Breast epithelium (tissue), 4 donors: ENCODE measurements at regions of chr17 and their contacts with region 1.

Region 1: DNA sequence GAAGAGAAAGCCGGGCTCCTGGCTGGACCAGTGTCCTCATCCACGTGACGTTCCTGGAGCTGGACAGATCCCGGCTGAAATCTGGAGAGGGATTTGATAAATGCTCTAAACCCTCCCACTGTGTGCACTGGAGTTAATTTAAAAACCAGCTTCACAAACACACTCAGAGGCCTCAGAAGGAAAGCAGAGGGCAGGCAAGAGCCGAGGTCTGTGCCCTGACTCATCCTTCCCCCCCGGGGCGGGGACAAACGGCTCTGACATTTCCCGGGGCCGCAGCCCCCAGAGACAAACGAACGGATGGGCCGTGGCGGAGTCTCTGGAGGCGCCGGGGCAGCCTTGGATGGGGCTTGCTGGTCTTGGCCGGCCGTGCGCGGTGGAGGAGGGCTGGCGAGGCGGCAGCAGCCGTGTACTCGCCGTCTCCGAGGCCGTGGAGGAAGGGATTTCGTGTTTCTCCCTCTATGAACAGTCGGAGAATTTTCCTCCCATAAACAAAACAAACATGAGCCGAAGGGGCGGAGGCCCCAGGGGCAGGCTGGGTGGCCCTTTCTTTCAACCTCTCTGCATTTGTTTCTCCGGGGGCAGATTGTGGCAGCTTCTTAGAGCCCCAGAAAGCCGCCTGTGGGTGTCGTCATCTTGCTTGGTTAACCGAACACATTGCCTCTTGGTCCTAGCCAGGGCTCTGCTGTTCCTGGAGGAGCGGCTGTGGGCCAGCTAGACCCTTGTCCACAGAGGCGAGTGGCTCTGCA is 94.3 kb downstream of the NTN1 start:
- DNase-seq: no peak
- H3K4me3 ChIP-seq: peak overlapping the region; percentile 41 to 66 (median 45)
- H3K27ac ChIP-seq: peak overlapping the region; percentile 61 to 83
- H3K4me1 ChIP-seq: no peaks in the 10 kb centered on the region
- H3K27me3 ChIP-seq: no peaks in the 10 kb centered on the region
- CTCF ChIP-seq: peak in 2 of 3 donors; percentile 13 to 30
- POLR2A ChIP-seq: no peak

Region 2: DNA sequence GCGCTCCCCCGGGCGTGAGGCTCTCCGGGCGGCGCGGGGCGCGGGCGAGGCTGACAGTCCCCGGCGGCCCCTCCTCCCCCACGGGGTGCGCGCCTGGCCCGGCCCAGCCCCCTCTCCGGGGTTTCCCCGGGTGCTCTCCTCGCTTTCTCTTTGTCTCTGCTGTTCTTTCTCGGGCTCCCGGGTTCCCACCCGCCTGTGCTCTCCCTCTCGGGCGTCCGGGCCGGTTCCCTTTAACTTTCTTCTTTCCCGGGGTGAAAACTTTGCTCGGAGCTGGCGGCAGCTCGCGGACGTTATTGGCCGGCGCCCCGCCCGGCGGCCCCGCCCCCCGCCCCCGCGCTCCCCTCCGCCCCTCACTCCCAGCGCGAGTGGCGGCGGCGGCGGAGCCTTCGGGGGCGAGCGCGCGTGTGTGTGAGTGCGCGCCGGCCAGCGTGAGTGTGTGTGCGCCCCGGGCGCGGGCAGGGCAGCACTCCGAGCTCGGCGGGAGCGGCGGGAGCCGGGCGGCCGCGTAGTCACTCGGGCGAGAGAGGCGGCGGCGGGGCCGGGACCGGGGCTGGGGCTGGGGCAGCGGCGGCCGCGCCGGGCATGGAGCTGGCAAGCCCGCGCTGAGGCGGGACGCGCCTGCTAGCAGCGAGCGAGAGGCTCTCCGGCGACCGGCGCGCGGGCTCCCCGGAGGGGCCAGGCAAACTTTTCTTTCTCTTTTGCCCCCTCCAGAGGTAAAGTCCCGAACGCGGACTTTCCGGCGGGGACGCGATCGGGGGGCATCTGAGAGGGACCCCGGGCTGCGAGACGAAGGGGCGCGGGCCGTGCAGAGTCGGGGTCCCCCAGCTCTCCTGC is 94.2 kb before region 1 on chr17 and contains the start of gene NTN1:
- intact Hi-C with region 1: loop called (anchors 10 kb)
- DNase-seq: no peak
- H3K4me3 ChIP-seq: peak within 1 kb of the TSS; percentile 66 to 79 (median 69)
- H3K27ac ChIP-seq: peak within 1 kb of the TSS; percentile 35 to 65
- H3K4me1 ChIP-seq: no peaks in the 10 kb centered on the region
- H3K27me3 ChIP-seq: peaks cover 0 to 22% of the 10 kb centered on the region in 2 donors
- CTCF ChIP-seq: no peak
- POLR2A ChIP-seq: no peak
- total RNA-seq, gene NTN1: 2.2 to 3.7 (median 3.3) TPM